Endothelial cell of umbilical vein (primary cell): ENCODE measurements at regions of chr12 and their contacts with region 1.

Region 1: DNA sequence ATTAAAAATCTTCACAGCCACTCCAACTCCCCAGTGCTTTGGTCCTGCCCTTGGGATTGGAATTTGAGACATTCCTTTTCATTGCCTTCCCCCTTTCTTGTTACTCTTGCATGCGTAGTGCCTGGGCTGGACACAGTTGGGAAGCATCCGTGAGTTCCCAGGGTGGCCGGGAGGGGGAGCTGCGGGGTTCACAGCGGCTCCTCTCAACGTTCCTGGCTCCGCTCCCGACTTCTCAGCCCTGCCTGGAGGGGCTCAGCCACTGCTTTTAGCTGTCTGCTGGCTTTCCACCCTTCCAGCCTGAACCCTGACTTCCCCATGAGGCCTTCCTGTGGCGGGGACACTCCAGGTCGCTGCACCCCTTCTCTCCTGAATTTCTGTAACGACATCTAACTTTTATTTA is 3.2 kb downstream of the TEX52 start:
- DNase-seq: peak; percentile 69
- H3K4me3 ChIP-seq: no peak overlapping the region
- H3K27ac ChIP-seq: no peak overlapping the region
- H3K4me1 ChIP-seq: peaks cover 4% of the 10 kb centered on the region
- H3K27me3 ChIP-seq: no peaks in the 10 kb centered on the region
- CTCF ChIP-seq: peak; percentile 92 to 96
- POLR2A ChIP-seq: no peak

Region 2: GRCh38 chr12:2834581-2835491 is 18.8 kb before region 1 on chr12 and contains the start of gene NRIP2:
- CTCF ChIA-PET with region 1: interaction called, 12 read pairs
- POLR2A ChIA-PET with region 1: no interaction called
- dilution Hi-C with region 1: no loop called
- intact Hi-C with region 1: no loop called
- DNase-seq: peak; percentile 29
- H3K4me3 ChIP-seq: no peak within 1 kb of the TSS
- H3K27ac ChIP-seq: no peak within 1 kb of the TSS
- H3K4me1 ChIP-seq: no peaks in the 10 kb centered on the region
- H3K27me3 ChIP-seq: peaks cover 0 to 4% of the 10 kb centered on the region in 2 experiments
- CTCF ChIP-seq: no peak
- POLR2A ChIP-seq: no peak
- total RNA-seq, gene NRIP2: not detected in 2 replicates

Region 3: GRCh38 chr12:2864198-2864597 is 10.6 kb after region 1 on chr12:
- CTCF ChIA-PET with region 1: interaction called, 33 read pairs
- POLR2A ChIA-PET with region 1: no interaction called
- dilution Hi-C with region 1: no loop called
- intact Hi-C with region 1: no loop called
- DNase-seq: no peak
- H3K4me3 ChIP-seq: no peak overlapping the region
- H3K27ac ChIP-seq: no peak overlapping the region
- H3K4me1 ChIP-seq: no peaks in the 10 kb centered on the region
- H3K27me3 ChIP-seq: no peaks in the 10 kb centered on the region
- CTCF ChIP-seq: no peak
- POLR2A ChIP-seq: no peak